Endothelial cell of umbilical vein (primary cell): ENCODE measurements at regions of chr3 and their contacts with region 1.

Region 1: DNA sequence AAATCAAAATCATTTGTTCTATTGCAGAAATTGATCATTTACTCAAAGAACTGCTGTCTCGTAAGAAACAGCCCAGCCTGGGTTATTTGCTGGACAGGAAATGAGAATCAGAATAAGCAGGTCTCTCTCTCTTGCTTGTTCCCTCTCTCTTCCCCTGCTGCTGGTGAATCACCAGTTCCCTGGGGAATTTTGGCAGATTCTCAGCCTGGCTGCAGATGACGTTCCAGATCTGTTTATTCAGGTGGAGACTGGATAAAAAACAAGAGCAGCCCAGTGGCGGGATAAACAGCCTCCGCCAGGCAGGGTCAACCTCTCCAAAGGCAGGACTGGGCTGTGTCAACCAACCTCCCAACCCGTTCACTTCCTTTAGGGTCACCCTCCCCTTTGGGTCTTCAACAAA is 72.1 kb downstream of the LRIG1 start:
- DNase-seq: peak; percentile 100
- H3K4me3 ChIP-seq: peak overlapping the region in 1 of 3 experiments; percentile 41
- H3K27ac ChIP-seq: peak overlapping the region; percentile 94
- H3K4me1 ChIP-seq: peaks cover 23% of the 10 kb centered on the region
- H3K27me3 ChIP-seq: no peaks in the 10 kb centered on the region
- CTCF ChIP-seq: no peak
- POLR2A ChIP-seq: peak; percentile 56

Region 2: GRCh38 chr3:66336333-66336766 is 92.4 kb before region 1 on chr3:
- CTCF ChIA-PET with region 1: no interaction called
- POLR2A ChIA-PET with region 1: no interaction called
- dilution Hi-C with region 1: no loop called
- intact Hi-C with region 1: no loop called
- DNase-seq: peak; percentile 96
- H3K4me3 ChIP-seq: peak overlapping the region in 1 of 3 experiments; percentile 5
- H3K27ac ChIP-seq: peak overlapping the region; percentile 85
- H3K4me1 ChIP-seq: peaks cover 31% of the 10 kb centered on the region
- H3K27me3 ChIP-seq: no peaks in the 10 kb centered on the region
- CTCF ChIP-seq: no peak
- POLR2A ChIP-seq: no peak

Region 3: GRCh38 chr3:66442254-66443117 is 13.8 kb after region 1 on chr3:
- CTCF ChIA-PET with region 1: interaction called, 10 read pairs
- POLR2A ChIA-PET with region 1: no interaction called
- dilution Hi-C with region 1: no loop called
- intact Hi-C with region 1: loop called (anchors 1 kb)
- DNase-seq: peak; percentile 92
- H3K4me3 ChIP-seq: no peak overlapping the region
- H3K27ac ChIP-seq: peak overlapping the region; percentile 79
- H3K4me1 ChIP-seq: peaks cover 34% of the 10 kb centered on the region
- H3K27me3 ChIP-seq: no peaks in the 10 kb centered on the region
- CTCF ChIP-seq: no peak
- POLR2A ChIP-seq: no peak